ENCODE measurements at regions of chr18 and their contacts with region 1.

Region 1: DNA sequence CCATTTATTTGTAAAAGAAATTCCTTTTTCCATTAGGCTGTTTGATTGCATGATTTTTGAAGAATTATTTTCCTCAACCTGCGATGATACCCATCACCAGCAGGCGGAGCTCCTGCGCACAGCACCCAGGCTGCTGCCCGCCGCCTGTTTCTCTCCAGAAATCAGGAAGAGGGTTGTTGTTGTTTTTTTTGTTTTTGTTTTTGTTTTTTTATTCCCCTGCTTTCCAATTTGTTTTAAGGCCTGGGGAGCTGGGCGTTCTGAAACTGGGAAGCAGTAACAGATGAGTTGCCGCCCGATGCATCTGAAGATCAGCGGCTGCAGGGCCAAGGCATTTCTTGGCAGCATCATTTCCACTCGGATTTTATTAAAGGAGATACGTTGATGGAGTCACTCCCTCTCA is 132.1 kb downstream of the MBP start:
- DNase-seq: no peak
- H3K4me3 ChIP-seq: no peak overlapping the region
- H3K27ac ChIP-seq: no peak overlapping the region
- H3K27me3 ChIP-seq: peaks cover 13% of the 10 kb centered on the region
- CTCF ChIP-seq: peak; percentile 100

Region 2: GRCh38 chr18:76803814-76804213 is 196.7 kb before region 1 on chr18:
- CTCF ChIA-PET with region 1: interaction called, 14 read pairs
- POLR2A ChIA-PET with region 1: no interaction called
- DNase-seq: no peak
- H3K4me3 ChIP-seq: peak overlapping the region; percentile 38; the same call in 1 of the 2 replicates
- H3K27ac ChIP-seq: no peak overlapping the region
- H3K27me3 ChIP-seq: peaks cover 6% of the 10 kb centered on the region
- CTCF ChIP-seq: peak; percentile 94

Region 3: GRCh38 chr18:76982841-76983587 is 17.5 kb before region 1 on chr18:
- CTCF ChIA-PET with region 1: interaction called, 47 read pairs
- POLR2A ChIA-PET with region 1: no interaction called
- DNase-seq: peak; percentile 32
- H3K4me3 ChIP-seq: no peak overlapping the region
- H3K27ac ChIP-seq: no peak overlapping the region
- H3K27me3 ChIP-seq: peaks cover 5% of the 10 kb centered on the region
- CTCF ChIP-seq: peak; percentile 93

Region 4: GRCh38 chr18:77031662-77032061 is 31.1 kb after region 1 on chr18:
- CTCF ChIA-PET with region 1: interaction called, 16 read pairs
- POLR2A ChIA-PET with region 1: no interaction called
- DNase-seq: no peak
- H3K4me3 ChIP-seq: no peak overlapping the region
- H3K27ac ChIP-seq: peak overlapping the region; percentile 21
- H3K27me3 ChIP-seq: no peaks in the 10 kb centered on the region
- CTCF ChIP-seq: no peak

Region 5: GRCh38 chr18:77054606-77055428 is 54.3 kb after region 1 on chr18:
- CTCF ChIA-PET with region 1: interaction called, 19 read pairs
- POLR2A ChIA-PET with region 1: no interaction called
- DNase-seq: peak; percentile 71
- H3K4me3 ChIP-seq: no peak overlapping the region
- H3K27ac ChIP-seq: peak overlapping the region; percentile 70
- H3K27me3 ChIP-seq: no peaks in the 10 kb centered on the region
- CTCF ChIP-seq: peak; percentile 92

Region 6: GRCh38 chr18:77101410-77102258 is 101.1 kb after region 1 on chr18:
- CTCF ChIA-PET with region 1: interaction called, 18 read pairs
- POLR2A ChIA-PET with region 1: no interaction called
- DNase-seq: peak; percentile 89
- H3K4me3 ChIP-seq: peak overlapping the region; percentile 44
- H3K27ac ChIP-seq: peak overlapping the region; percentile 99
- H3K27me3 ChIP-seq: no peaks in the 10 kb centered on the region
- CTCF ChIP-seq: no peak

Region 7: DNA sequence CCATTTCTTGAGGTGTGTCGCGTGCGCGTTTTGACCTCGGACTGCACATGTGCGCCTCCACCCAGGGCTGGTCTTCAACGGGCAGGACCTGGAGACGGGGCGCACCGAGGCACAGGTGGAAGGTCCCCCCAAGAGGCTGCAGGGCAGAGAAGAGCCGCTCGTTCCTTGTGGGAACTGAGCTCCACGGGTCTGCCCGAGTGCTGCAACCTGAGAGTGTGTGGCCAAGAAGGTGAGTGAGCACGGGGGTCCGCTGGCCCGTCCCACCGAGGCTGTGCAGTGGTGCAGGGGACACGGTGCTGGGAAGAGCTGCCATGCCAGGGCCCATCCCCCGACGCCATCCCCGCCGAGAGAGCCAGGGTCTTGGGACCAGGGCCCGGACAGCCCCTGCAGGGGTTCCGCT is 517.4 kb after region 1 on chr18:
- CTCF ChIA-PET with region 1: no interaction called
- POLR2A ChIA-PET with region 1: no interaction called
- DNase-seq: no peak
- H3K4me3 ChIP-seq: no peak overlapping the region
- H3K27ac ChIP-seq: no peak overlapping the region
- H3K27me3 ChIP-seq: no peaks in the 10 kb centered on the region
- CTCF ChIP-seq: no peak